SK-N-SH (cell line): ENCODE measurements at regions of chr12 and their contacts with region 1.

Region 1: DNA sequence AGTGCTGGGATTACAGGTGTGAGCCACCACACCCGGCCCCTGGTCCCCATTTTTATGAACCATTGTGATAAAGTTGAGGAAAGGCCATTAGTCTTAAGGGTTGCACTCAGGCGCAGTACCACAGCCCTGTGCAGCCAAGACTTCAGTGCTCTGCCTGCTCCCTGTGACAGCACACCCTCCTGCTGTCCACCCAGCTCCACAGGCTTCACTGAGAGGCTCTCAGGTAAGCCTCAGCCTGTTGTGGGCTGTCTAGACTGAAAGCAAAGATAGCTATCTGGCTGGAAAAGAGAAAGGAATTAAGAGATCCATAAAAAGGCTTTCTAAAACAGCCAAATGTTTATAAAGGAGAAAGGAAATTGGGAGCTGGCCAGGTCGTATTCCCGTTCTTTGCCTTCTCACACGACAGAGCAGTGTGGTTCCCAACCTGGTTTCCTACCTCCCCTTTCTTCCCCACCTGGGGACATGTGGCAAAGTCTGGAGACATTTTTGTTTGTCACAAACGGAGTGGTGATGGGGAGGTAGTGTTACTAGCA is 19.1 kb upstream of the DNM1L start:
- DNase-seq: no peak
- H3K4me3 ChIP-seq: no peak overlapping the region
- H3K27ac ChIP-seq: no peak overlapping the region
- H3K4me1 ChIP-seq: peaks cover 0 to 3% of the 10 kb centered on the region in 2 experiments; a peak in 1 of 4 replicates
- H3K27me3 ChIP-seq: no peaks in the 10 kb centered on the region
- CTCF ChIP-seq: no peak
- EP300 ChIP-seq: no peak
- RAD21 ChIP-seq: no peak

Region 2: GRCh38 chr12:32365473-32366064 is 294.4 kb before region 1 on chr12:
- CTCF ChIA-PET with region 1: interaction called, 14 read pairs
- POLR2A ChIA-PET with region 1: no interaction called
- DNase-seq: peak; percentile 55
- H3K4me3 ChIP-seq: no peak overlapping the region
- H3K27ac ChIP-seq: no peak overlapping the region
- H3K4me1 ChIP-seq: peaks cover 0 to 5% of the 10 kb centered on the region in 2 experiments; a peak in 3 of 4 replicates
- H3K27me3 ChIP-seq: no peaks in the 10 kb centered on the region
- CTCF ChIP-seq: peak; percentile 93
- EP300 ChIP-seq: no peak
- RAD21 ChIP-seq: peak; percentile 88

Region 3: DNA sequence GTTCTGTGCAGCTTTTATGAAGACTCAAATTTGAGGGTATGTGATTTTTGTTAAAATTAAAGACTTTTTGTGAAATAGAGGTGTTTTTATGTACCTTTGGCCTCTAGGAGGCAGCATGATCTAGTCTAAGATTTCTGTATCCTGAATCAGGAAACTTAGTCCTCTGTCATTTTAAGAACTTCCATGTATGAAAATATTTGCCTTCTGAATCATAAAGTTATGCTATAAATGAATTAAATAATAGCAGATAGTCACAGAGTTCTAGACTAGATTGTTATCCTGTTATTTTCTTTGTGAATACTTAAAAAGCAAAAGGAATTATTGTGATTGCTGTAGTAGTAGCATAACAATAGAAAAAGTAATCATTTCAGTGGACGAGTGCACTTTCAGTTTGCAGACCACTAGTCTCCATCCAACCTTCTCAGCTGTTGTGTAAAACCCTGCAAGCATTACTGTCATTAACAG is 204.3 kb before region 1 on chr12:
- CTCF ChIA-PET with region 1: interaction called, 73 read pairs
- POLR2A ChIA-PET with region 1: no interaction called
- DNase-seq: peak; percentile 56
- H3K4me3 ChIP-seq: peak overlapping the region; percentile 31 to 53
- H3K27ac ChIP-seq: peak overlapping the region in 1 of 2 experiments; percentile 49; a peak in 2 of 4 replicates
- H3K4me1 ChIP-seq: peaks cover 0 to 25% of the 10 kb centered on the region in 2 experiments; a peak in 3 of 4 replicates
- H3K27me3 ChIP-seq: no peaks in the 10 kb centered on the region
- CTCF ChIP-seq: peak; percentile 84
- EP300 ChIP-seq: no peak
- RAD21 ChIP-seq: peak; percentile 90

Region 4: DNA sequence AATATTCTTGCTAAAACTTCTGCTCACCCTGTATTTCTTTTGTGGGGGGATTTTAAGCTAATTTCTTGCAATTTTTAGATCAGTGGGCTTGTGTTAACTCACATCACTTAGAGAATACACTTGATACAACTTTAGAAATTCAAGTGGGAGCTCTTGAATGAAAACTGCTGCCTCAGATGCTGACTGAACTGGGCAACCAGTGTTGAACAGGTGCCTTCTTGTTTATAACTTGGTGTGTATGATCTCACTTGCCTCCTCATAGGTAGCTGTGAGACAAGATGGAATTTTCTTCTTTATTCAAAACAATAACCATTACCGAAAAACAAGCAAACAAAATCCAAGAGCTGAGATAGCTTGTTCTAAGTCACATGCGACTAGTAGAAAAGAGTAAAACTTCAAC is 197.1 kb before region 1 on chr12:
- CTCF ChIA-PET with region 1: interaction called, 73 read pairs
- POLR2A ChIA-PET with region 1: no interaction called
- DNase-seq: no peak
- H3K4me3 ChIP-seq: no peak overlapping the region
- H3K27ac ChIP-seq: no peak overlapping the region
- H3K4me1 ChIP-seq: no peaks in the 10 kb centered on the region
- H3K27me3 ChIP-seq: no peaks in the 10 kb centered on the region
- CTCF ChIP-seq: no peak
- EP300 ChIP-seq: no peak
- RAD21 ChIP-seq: no peak

Region 5: GRCh38 chr12:32647275-32647674 is 12.7 kb before region 1 on chr12:
- CTCF ChIA-PET with region 1: interaction called, 17 read pairs
- POLR2A ChIA-PET with region 1: no interaction called
- DNase-seq: no peak
- H3K4me3 ChIP-seq: no peak overlapping the region
- H3K27ac ChIP-seq: no peak overlapping the region
- H3K4me1 ChIP-seq: no peaks in the 10 kb centered on the region; a peak in 1 of 4 replicates
- H3K27me3 ChIP-seq: no peaks in the 10 kb centered on the region
- CTCF ChIP-seq: no peak
- EP300 ChIP-seq: no peak
- RAD21 ChIP-seq: no peak